ENCODE measurements at regions of chrX and their contacts with region 1.

Region 1: DNA sequence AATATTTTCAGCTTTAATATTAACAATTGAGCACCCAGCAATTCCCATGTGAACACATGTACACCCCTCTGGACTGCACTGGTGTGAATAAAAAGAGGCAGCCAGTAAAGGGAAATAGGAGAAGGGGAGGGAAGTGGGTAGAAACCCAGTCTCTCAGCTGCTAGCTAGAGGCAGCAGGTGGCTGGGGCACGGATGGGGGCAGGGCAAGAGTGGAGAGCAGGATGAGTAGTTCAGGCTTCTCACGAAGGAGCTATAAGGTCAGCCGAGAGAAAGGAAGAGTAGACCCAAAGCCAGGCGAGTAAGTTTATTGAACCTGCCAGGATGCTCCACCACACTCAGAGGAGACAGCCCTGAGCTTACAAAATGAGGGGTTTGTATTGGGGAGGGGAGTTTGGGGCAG is 184.8 kb upstream of the MTMR8 start:
- DNase-seq: no peak
- ATAC-seq: no peak
- H3K4me3 ChIP-seq: no peak overlapping the region
- H3K27ac ChIP-seq: no peak overlapping the region
- H3K4me1 ChIP-seq: no peaks in the 10 kb centered on the region
- H3K27me3 ChIP-seq: no peaks in the 10 kb centered on the region
- CTCF ChIP-seq: no peak
- EP300 ChIP-seq: no peak
- POLR2A ChIP-seq: no peak
- RAD21 ChIP-seq: no peak

Region 2: GRCh38 chrX:64536736-64537135 is 43.3 kb before region 1 on chrX:
- CTCF ChIA-PET with region 1: no interaction called
- POLR2A ChIA-PET with region 1: no interaction called
- RAD21 ChIA-PET with region 1: no interaction called
- SMC1A ChIA-PET with region 1: no interaction called
- in situ Hi-C with region 1: no loop called
- intact Hi-C with region 1: no loop called
- DNase-seq: no peak
- ATAC-seq: no peak
- H3K4me3 ChIP-seq: no peak overlapping the region
- H3K27ac ChIP-seq: no peak overlapping the region
- H3K4me1 ChIP-seq: no peaks in the 10 kb centered on the region
- H3K27me3 ChIP-seq: no peaks in the 10 kb centered on the region
- CTCF ChIP-seq: no peak
- EP300 ChIP-seq: no peak
- POLR2A ChIP-seq: no peak
- RAD21 ChIP-seq: no peak

Region 3: DNA sequence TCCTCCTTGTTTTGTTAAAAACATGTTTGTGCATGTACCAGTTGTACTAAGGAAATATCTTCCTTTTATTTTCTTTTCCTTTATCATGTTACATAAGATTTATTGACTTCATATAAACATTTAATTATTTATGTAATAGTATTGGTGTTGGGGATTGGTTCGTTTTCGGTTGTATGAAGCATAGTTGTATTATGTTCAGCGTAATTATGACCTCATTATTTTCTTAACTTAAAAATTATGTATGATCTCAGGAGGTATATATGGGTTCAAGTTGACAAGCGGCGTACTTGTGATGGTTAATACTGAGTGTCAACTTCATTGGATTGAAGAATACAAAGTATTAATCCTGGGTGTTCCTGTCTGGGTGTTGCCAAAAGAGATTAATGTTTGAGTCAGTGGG is 51.7 kb after region 1 on chrX:
- CTCF ChIA-PET with region 1: no interaction called
- POLR2A ChIA-PET with region 1: no interaction called
- RAD21 ChIA-PET with region 1: no interaction called
- SMC1A ChIA-PET with region 1: interaction called, 5 read pairs
- in situ Hi-C with region 1: loop called (anchors 10 kb)
- intact Hi-C with region 1: no loop called
- DNase-seq: no peak
- ATAC-seq: no peak
- H3K4me3 ChIP-seq: no peak overlapping the region
- H3K27ac ChIP-seq: no peak overlapping the region
- H3K4me1 ChIP-seq: no peaks in the 10 kb centered on the region
- H3K27me3 ChIP-seq: no peaks in the 10 kb centered on the region
- CTCF ChIP-seq: no peak
- EP300 ChIP-seq: no peak
- POLR2A ChIP-seq: no peak
- RAD21 ChIP-seq: no peak

Region 4: DNA sequence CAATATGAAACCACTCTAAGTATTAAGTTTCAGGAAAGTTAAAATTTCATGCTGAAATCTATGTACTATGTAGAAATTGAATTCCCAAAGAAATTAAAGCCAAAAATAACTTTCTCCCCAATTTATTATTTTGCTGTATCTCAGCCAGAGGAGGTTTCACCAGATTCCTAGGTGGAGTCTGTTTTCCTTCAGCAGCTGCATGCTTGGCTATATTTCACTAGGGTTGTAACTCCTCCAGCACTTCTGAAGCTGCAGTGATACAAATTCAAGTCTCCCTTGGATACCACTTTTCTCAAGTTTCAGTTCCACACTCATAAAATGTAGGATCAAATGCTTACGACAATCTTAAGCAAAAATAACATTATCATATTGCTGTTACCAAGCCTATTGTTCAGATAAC is 437.4 kb after region 1 on chrX:
- CTCF ChIA-PET with region 1: no interaction called
- POLR2A ChIA-PET with region 1: no interaction called
- RAD21 ChIA-PET with region 1: no interaction called
- SMC1A ChIA-PET with region 1: no interaction called
- in situ Hi-C with region 1: loop called (anchors 25 kb)
- intact Hi-C with region 1: no loop called
- DNase-seq: no peak
- ATAC-seq: no peak
- H3K4me3 ChIP-seq: no peak overlapping the region
- H3K27ac ChIP-seq: no peak overlapping the region
- H3K4me1 ChIP-seq: no peaks in the 10 kb centered on the region
- H3K27me3 ChIP-seq: no peaks in the 10 kb centered on the region
- CTCF ChIP-seq: no peak
- EP300 ChIP-seq: no peak
- POLR2A ChIP-seq: no peak
- RAD21 ChIP-seq: no peak

Measured in GM12878 (cell line).